Aorta (tissue), 5 donors: ENCODE measurements at regions of chr11 and their contacts with region 1.

Region 1: DNA sequence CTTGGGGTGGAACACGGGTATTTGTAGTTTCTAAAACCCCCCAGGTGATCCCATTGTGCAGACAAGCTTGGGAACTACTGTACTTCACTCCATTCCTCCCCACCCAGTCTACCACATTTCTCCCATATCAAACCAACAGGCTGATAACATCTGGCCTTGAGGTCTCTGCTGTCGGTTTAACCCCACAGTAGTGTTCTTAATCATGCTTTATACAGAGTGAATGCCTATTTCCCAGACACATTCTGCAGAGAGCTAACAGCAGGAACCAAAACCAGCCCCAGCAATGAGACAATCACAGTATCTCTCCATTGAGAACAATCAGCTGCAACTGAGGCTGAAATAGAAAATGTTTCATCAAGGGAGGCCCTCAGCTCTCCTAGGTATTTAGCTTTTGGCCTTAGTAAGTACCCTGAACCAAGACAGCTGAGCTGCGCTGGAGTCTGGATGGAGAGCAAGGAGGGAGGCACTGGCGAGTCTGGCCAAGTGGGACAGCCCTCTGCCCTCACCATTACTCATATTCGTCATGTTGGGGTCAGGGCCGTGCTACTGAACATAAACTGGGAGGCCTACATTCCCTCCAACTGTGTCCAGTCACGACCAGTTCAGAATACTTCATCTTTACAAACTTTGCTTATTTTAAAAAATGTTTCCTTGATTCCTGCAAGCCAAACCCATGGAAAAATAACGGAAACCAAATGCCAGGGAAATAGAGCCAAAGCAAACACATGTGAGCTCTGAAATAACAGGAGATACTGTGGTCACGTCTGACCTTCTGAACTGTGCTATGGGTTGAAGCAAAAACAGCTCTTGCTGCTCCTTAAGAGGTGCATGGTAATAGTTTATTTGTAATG is 81.0 kb downstream of the CCDC34 start:
- DNase-seq: peak; percentile 81 to 86
- ATAC-seq: peak; percentile 91
- H3K4me3 ChIP-seq: no peak overlapping the region
- H3K27ac ChIP-seq: peak overlapping the region; percentile 27 to 82
- H3K4me1 ChIP-seq: peaks cover 6 to 9% of the 10 kb centered on the region in 2 donors
- H3K27me3 ChIP-seq: no peaks in the 10 kb centered on the region

Region 2: GRCh38 chr11:27209562-27210005 is 72.4 kb before region 1 on chr11:
- intact Hi-C with region 1: loop called in 1 of 2 experiments (anchors 5 kb)
- DNase-seq: peak in 1 of 2 donors; percentile 77
- ATAC-seq: peak; percentile 60
- H3K4me3 ChIP-seq: no peak overlapping the region
- H3K27ac ChIP-seq: no peak overlapping the region
- H3K4me1 ChIP-seq: peaks cover 0 to 11% of the 10 kb centered on the region in 2 donors
- H3K27me3 ChIP-seq: no peaks in the 10 kb centered on the region

Region 3: GRCh38 chr11:27362749-27363575 is 81.0 kb after region 1 on chr11 and contains the start of gene CCDC34:
- intact Hi-C with region 1: no loop called
- DNase-seq: peak; percentile 95
- ATAC-seq: peak; percentile 99
- H3K4me3 ChIP-seq: peak within 1 kb of the TSS; percentile 63 to 74
- H3K27ac ChIP-seq: no peak within 1 kb of the TSS
- H3K4me1 ChIP-seq: peaks cover 0 to 2% of the 10 kb centered on the region in 2 donors
- H3K27me3 ChIP-seq: no peaks in the 10 kb centered on the region
- total RNA-seq, gene CCDC34: 1.4 to 3.1 TPM